ENCODE measurements at regions of chr11 and their contacts with region 1.

Region 1: DNA sequence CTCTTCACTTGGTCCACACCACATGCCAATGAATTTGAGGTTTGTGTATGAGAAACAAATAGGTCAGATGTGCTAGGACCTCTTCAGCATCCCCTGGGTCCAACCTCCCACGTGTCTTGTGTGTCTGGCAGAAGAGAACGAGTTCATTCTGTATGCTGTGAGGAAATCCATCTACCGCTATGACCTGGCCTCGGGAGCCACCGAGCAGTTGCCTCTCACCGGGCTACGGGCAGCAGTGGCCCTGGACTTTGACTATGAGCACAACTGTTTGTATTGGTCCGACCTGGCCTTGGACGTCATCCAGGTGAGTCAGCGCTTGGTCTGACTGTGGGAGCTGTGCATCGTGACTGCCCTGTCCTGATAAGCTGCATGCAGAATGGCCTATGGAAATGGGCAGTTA is 101.0 kb upstream of the SORL1-AS1 start:
- DNase-seq: no peak
- H3K4me3 ChIP-seq: no peak overlapping the region
- H3K27ac ChIP-seq: no peak overlapping the region
- H3K4me1 ChIP-seq: no peaks in the 10 kb centered on the region
- H3K27me3 ChIP-seq: no peaks in the 10 kb centered on the region
- CTCF ChIP-seq: no peak
- POLR2A ChIP-seq: no peak

Region 2: GRCh38 chr11:121652982-121653381 is 99.2 kb after region 1 on chr11:
- CTCF ChIA-PET with region 1: no interaction called
- POLR2A ChIA-PET with region 1: no interaction called
- dilution Hi-C with region 1: no loop called
- intact Hi-C with region 1: no loop called
- DNase-seq: peak; percentile 10
- H3K4me3 ChIP-seq: no peak overlapping the region
- H3K27ac ChIP-seq: no peak overlapping the region
- H3K4me1 ChIP-seq: peaks cover 2% of the 10 kb centered on the region
- H3K27me3 ChIP-seq: peaks cover 5 to 16% of the 10 kb centered on the region in 2 experiments
- CTCF ChIP-seq: peak; percentile 23 to 27
- POLR2A ChIP-seq: no peak

Region 3: GRCh38 chr11:121936781-121937447 is 383.1 kb after region 1 on chr11:
- CTCF ChIA-PET with region 1: no interaction called
- POLR2A ChIA-PET with region 1: no interaction called
- dilution Hi-C with region 1: no loop called
- intact Hi-C with region 1: no loop called
- DNase-seq: no peak
- H3K4me3 ChIP-seq: no peak overlapping the region
- H3K27ac ChIP-seq: no peak overlapping the region
- H3K4me1 ChIP-seq: no peaks in the 10 kb centered on the region
- H3K27me3 ChIP-seq: no peaks in the 10 kb centered on the region
- CTCF ChIP-seq: no peak
- POLR2A ChIP-seq: no peak

Region 4: DNA sequence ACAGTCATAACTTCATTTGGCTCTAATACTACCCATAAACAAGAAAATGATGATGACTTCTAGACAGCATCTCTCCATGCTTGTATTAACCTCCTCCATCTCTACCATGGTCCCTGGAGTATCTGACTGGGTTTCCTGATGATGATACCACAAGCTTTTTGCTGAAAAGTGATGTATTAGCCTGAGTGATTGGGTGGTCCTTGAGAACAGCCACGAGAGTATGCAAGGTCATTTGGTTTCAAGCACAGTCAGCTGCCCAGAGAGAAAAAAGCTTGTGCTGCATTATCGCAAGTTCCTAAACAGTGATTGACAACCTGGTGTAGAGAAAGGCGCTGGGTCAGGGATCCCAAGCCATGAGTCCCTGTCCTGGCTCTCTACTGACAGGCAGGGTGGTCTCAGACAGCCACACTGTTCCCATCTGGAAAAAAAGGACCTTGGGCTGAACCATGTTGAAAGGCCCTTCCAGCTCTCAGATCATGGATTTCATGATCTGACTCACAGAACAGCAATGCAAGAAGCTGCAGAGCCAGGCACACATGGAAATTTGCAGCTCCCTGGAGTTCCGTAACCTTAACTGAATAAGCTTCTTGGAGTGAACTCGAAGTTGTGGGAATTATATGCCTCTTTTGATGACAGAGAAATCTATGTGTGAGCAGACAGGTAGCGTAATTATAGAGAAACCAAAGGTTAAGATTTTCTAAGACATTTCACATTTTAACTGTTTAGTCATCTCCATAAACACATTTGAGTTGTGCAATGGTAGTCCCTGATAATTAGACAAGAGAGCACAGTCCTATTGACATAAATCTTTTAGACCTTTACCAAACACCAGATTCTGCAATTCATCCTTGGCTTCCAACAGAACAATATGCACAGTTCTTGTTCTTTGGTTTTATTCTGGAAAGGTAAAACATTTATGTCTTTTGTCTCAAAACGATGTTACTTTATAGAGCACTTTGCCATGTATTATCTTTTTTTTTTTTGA is 1047.6 kb after region 1 on chr11:
- CTCF ChIA-PET with region 1: no interaction called
- POLR2A ChIA-PET with region 1: interaction called, 14 read pairs
- dilution Hi-C with region 1: no loop called
- intact Hi-C with region 1: no loop called
- DNase-seq: no peak
- H3K4me3 ChIP-seq: no peak overlapping the region
- H3K27ac ChIP-seq: no peak overlapping the region
- H3K4me1 ChIP-seq: no peaks in the 10 kb centered on the region
- H3K27me3 ChIP-seq: peaks cover 0 to 1% of the 10 kb centered on the region in 2 experiments
- CTCF ChIP-seq: no peak
- POLR2A ChIP-seq: no peak

Measured in endothelial cell of umbilical vein (primary cell).